Sciatic nerve (tissue), 2 donors: ENCODE measurements at regions of chr17 and their contacts with region 1.

Region 1: GRCh38 chr17:78450696-78451345 is 72.4 kb downstream of the PGS1 start:
- DNase-seq: no peak
- ATAC-seq: no peak

Region 2: GRCh38 chr17:79053251-79053925 is 602.6 kb after region 1 on chr17:
- intact Hi-C with region 1: loop called (anchors 10 kb)
- DNase-seq: no peak
- ATAC-seq: no peak